GM18951 (cell line): ENCODE measurements at regions of chr22 and their contacts with region 1.

Region 1: DNA sequence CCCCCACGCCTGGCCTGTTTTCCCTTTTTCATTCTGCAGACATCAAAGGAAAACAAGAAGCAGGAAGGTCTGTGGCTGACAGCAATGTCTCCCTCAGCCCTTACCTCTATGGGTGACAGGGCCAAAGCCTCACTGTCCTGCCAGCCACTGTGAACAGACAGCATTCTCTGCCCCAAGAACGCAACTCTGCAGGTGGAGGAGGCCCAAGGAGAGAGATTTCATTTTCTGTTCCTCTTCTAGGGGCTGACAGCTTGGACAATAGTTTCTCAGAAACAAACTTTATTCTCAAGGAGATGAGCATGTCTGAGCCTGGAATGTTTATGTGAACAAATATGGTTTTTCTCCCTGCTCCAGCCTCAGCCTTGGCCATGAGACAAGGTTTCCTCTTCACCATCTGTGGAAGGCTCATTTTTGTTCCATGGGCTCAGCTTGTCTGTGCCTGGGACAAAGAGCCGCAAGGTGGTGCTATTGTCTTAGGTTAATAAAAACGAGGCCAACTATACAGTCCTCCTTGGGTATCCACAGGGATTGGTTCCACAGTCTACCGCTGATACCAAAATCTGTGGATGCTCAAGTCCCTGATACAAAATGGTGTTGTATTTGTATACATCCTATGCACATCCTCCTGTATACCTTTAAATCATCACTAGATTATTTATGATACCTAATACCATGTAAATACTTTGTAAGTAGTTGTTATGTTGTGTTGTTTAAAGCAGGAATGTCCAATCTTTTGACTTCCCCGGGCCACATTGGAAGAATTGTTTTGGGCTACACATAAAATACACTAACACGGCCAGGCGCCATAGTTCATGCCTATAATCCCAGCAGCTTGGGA is 5.8 kb downstream of the PIWIL3 start:
- POLR2A ChIP-seq: no peak

Region 2: DNA sequence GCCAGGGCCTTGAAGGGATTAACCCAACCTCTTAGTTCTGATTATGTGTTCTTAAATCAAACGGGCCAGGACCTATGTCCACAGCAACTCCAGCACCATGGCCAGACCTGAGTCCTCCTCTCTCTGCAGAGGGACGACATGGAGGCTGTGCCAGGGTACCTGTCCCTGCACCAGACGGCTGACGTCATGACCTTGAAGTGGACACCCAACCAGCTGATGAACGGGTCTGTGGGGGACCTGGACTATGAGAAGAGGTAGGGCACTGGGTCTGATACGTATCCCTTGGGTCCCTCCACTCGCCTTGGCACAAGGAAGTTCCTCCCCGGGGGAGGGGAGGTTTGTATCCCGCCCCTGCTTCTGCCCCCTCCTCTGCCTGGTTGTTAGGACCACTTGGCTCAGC is 90.8 kb after region 1 on chr22:
- in situ Hi-C with region 1: loop called (anchors 10 kb)
- POLR2A ChIP-seq: no peak

Region 3: GRCh38 chr22:25153961-25154666 is 385.4 kb after region 1 on chr22:
- in situ Hi-C with region 1: no loop called
- POLR2A ChIP-seq: no peak